Panc1 (cell line): ENCODE measurements at regions of chr1 and their contacts with region 1.

Region 1: GRCh38 chr1:219201656-219202055 is 28.0 kb downstream of the LYPLAL1 start:
- DNase-seq: no peak
- ATAC-seq: no peak
- H3K4me3 ChIP-seq: no peak overlapping the region
- H3K27ac ChIP-seq: no peak overlapping the region
- H3K4me1 ChIP-seq: no peaks in the 10 kb centered on the region
- H3K27me3 ChIP-seq: no peaks in the 10 kb centered on the region
- CTCF ChIP-seq: no peak

Region 2: DNA sequence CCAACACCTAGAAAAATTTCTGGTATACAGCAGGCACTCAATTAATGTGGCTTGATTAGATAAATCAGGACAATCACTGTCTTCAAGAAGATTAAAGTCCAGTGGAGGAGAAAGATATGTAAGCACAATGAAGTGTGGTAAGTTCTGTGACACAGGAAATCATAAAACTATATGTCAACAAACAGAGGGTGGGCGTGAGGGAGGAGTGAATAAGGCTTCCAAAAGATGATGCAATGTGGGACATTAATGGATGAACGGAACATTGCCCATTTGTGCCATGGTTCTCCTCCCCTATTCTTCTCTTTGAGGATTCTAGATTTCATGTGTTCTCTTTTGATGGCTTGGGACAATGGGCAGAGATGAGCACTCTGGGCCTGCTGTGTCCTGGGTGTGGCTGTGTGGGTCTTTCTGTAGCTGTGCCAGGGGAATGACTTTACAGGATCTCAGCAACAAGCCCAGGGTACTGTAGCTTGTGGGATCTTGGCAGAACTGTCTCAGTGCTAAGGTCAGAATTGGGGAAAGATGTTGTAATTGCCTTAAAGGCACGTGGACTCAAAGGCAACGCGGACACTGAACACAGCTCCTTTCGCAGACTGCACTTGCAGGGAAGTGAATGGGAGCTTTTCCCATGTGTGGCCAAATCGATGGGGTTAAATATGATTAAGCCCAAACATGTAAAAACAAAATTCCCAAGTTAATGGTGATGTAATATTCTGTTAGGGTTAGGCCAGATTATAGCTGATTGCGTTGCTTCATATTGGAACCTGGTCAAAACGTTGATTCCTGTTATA is 489.6 kb before region 1 on chr1:
- CTCF ChIA-PET with region 1: no interaction called
- POLR2A ChIA-PET with region 1: no interaction called
- in situ Hi-C with region 1: no loop called
- intact Hi-C with region 1: no loop called
- DNase-seq: no peak
- ATAC-seq: no peak
- H3K4me3 ChIP-seq: no peak overlapping the region
- H3K27ac ChIP-seq: peak overlapping the region; percentile 57; the same call in 1 of the 2 replicates
- H3K4me1 ChIP-seq: no peaks in the 10 kb centered on the region
- H3K27me3 ChIP-seq: no peaks in the 10 kb centered on the region
- CTCF ChIP-seq: no peak

Region 3: GRCh38 chr1:218925777-218926176 is 275.9 kb before region 1 on chr1:
- CTCF ChIA-PET with region 1: no interaction called
- POLR2A ChIA-PET with region 1: no interaction called
- in situ Hi-C with region 1: no loop called
- intact Hi-C with region 1: no loop called
- DNase-seq: no peak
- ATAC-seq: no peak
- H3K4me3 ChIP-seq: no peak overlapping the region
- H3K27ac ChIP-seq: no peak overlapping the region
- H3K4me1 ChIP-seq: no peaks in the 10 kb centered on the region
- H3K27me3 ChIP-seq: no peaks in the 10 kb centered on the region
- CTCF ChIP-seq: no peak

Region 4: DNA sequence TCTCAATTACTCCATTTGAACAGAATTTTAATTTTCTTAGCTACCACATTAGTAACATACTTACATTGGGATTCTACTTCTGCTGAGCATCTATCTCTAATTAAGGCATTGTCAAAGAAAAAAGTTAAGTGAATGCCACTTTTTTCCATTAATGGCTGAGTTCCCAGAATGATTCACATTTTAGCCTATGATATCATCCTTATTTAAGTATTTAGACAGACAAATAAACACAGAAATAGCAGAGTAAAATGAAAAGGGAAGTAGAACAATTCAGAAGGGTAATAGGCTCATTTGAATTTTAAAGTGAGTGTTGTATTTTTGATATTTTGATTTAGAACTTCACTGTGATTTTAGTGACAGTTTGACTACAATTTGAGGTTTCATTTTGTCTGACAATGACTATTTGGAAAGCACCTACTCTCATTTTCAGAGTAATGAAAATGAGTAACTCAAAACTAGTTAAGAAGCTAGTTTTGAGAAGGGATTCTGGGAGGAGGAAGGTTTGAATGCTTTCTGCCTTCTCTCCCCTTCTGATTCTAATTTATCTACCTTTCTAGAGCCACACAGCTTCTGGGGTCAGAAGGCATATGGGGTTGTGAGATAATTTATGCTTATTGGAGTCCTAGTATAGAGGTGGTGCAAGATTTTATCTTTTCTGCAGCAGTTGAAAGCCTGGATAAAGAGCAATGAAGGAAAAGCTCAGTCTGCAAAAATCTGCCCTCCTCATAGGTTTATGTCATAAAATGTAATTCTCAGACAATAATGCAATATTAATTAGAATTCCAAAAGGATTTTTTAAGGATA is 12.4 kb before region 1 on chr1:
- CTCF ChIA-PET with region 1: no interaction called
- POLR2A ChIA-PET with region 1: no interaction called
- in situ Hi-C with region 1: no loop called
- intact Hi-C with region 1: no loop called
- DNase-seq: no peak
- ATAC-seq: no peak
- H3K4me3 ChIP-seq: no peak overlapping the region
- H3K27ac ChIP-seq: peak overlapping the region; percentile 48; the same call in 1 of the 2 replicates
- H3K4me1 ChIP-seq: peaks cover 6% of the 10 kb centered on the region
- H3K27me3 ChIP-seq: no peaks in the 10 kb centered on the region
- CTCF ChIP-seq: no peak

Region 5: GRCh38 chr1:219385786-219386427 is 184.3 kb after region 1 on chr1:
- CTCF ChIA-PET with region 1: no interaction called
- POLR2A ChIA-PET with region 1: no interaction called
- in situ Hi-C with region 1: no loop called
- intact Hi-C with region 1: loop called (anchors 5 kb)
- DNase-seq: peak; percentile 68
- ATAC-seq: peak; percentile 88
- H3K4me3 ChIP-seq: no peak overlapping the region
- H3K27ac ChIP-seq: no peak overlapping the region
- H3K4me1 ChIP-seq: no peaks in the 10 kb centered on the region; the same call in 1 of the 2 replicates
- H3K27me3 ChIP-seq: no peaks in the 10 kb centered on the region
- CTCF ChIP-seq: peak; percentile 87